Activated naive CD4-positive, alpha-beta T cell treated with anti-CD3 and anti-CD28 coated beads for 36 hours (primary cell): ENCODE measurements at regions of chr12 and their contacts with region 1.

Region 1: GRCh38 chr12:112108201-112109079 is at the start of gene NAA25:
- DNase-seq: peak; percentile 87
- H3K4me3 Mint-ChIP-seq: peak within 1 kb of the TSS; percentile 96
- H3K27ac Mint-ChIP-seq: peak within 1 kb of the TSS; percentile 99
- H3K4me1 Mint-ChIP-seq: peaks cover 64% of the 10 kb centered on the region
- H3K27me3 Mint-ChIP-seq: no peaks in the 10 kb centered on the region
- total RNA-seq, gene NAA25: 52.4 to 55.7 TPM

Region 2: GRCh38 chr12:112066566-112066965 is 41.9 kb before region 1 on chr12:
- CTCF ChIA-PET with region 1: no interaction called
- intact Hi-C with region 1: no loop called
- DNase-seq: no peak
- H3K4me3 Mint-ChIP-seq: no peak overlapping the region
- H3K27ac Mint-ChIP-seq: peak overlapping the region; percentile 3
- H3K4me1 Mint-ChIP-seq: no peaks in the 10 kb centered on the region
- H3K27me3 Mint-ChIP-seq: no peaks in the 10 kb centered on the region

Region 3: DNA sequence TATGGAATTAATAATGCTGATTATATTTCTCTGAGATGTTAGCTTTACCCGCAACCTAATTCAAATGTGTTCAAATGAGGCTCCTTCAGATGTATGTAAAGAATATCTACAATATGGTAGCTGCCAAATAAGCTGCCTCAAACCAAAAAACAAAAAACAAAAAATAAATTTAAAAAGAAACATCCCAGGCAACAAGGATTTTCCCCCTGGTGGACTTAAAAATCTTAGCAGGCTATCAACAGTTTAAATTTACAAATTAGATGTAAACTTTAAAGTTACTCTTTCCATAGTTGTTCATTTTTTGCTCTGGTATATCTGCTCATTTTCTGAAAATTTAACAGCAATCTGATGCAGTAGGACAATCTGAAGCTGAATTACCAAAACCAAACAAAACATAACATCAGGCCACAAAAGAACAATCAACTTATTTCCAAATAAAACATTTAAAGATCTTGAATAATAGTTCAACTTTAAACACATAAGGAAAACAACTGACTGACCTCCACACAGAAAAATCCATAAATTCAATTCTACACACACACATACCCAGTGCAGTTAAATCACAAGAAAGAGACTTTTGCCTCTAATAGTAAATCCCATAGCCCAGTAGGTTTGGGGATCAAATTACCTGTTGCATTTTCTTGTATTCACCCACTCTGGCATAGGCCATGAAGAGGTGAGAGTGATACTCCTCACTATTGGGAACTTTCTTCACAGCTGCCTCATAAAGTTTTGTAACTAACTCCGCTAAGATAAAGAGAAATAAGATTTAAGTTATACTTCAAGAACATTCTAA is 21.2 kb before region 1 on chr12:
- CTCF ChIA-PET with region 1: no interaction called
- intact Hi-C with region 1: loop called (anchors 1 kb)
- DNase-seq: no peak
- H3K4me3 Mint-ChIP-seq: no peak overlapping the region
- H3K27ac Mint-ChIP-seq: peak overlapping the region; percentile 0
- H3K4me1 Mint-ChIP-seq: peaks cover 30% of the 10 kb centered on the region
- H3K27me3 Mint-ChIP-seq: no peaks in the 10 kb centered on the region

Region 4: GRCh38 chr12:112096667-112097066 is 11.8 kb before region 1 on chr12:
- CTCF ChIA-PET with region 1: interaction called, 5 read pairs
- intact Hi-C with region 1: loop called (anchors 1 kb)
- DNase-seq: peak; percentile 59
- H3K4me3 Mint-ChIP-seq: peak overlapping the region; percentile 1
- H3K27ac Mint-ChIP-seq: peak overlapping the region; percentile 92
- H3K4me1 Mint-ChIP-seq: peaks cover 50% of the 10 kb centered on the region
- H3K27me3 Mint-ChIP-seq: no peaks in the 10 kb centered on the region

Region 5: DNA sequence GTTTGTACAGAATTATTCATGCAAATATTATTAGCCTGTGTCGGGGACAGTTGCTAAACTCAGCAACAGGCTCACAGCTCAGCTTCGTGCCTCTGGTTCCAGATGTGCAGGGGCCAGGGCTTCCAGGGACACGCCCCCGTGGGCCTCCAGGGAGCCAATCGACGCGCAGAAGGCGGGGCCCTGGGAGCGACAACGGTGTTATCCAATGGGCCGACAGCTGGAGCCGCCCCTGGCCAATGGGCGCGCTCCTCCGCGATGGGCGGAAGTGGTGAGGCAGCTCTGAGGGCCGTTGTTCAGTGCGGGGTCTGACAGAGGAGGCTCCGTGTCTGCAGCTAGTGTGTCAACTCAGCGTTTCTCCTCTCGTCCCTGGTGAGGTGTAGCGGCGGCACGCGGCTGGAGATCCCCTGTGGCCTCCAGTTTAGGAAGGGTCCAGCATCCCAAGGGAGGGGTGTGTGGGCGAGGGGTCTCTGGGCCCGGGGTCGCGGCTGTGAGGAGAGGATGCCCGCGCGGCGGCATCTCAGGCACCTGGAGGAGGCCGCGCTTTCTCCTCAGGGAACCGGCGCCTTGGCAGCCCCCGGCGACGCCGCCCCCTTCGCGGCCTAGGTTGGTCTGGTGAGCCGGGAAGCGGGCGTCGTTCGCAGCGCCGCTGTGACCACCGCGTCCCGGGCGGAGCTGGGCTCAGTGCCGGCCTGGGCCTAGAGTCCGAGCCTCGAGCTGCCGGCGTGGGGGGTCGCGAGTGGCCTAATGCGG is 17.0 kb after region 1 on chr12 and contains the start of gene TRAFD1:
- CTCF ChIA-PET with region 1: interaction called, 6 read pairs
- intact Hi-C with region 1: loop called (anchors 1 kb)
- DNase-seq: peak; percentile 98
- H3K4me3 Mint-ChIP-seq: peak within 1 kb of the TSS; percentile 72
- H3K27ac Mint-ChIP-seq: peak within 1 kb of the TSS; percentile 75
- H3K4me1 Mint-ChIP-seq: peaks cover 42% of the 10 kb centered on the region
- H3K27me3 Mint-ChIP-seq: no peaks in the 10 kb centered on the region
- total RNA-seq, gene TRAFD1: 49.6 to 55.7 TPM

Region 6: GRCh38 chr12:114054982-114055381 is 1946.5 kb after region 1 on chr12:
- CTCF ChIA-PET with region 1: no interaction called
- intact Hi-C with region 1: no loop called
- DNase-seq: no peak
- H3K4me3 Mint-ChIP-seq: no peak overlapping the region
- H3K27ac Mint-ChIP-seq: no peak overlapping the region
- H3K4me1 Mint-ChIP-seq: no peaks in the 10 kb centered on the region
- H3K27me3 Mint-ChIP-seq: peaks cover 3% of the 10 kb centered on the region